Transverse colon (tissue), 4 donors: ENCODE measurements at regions of chr7 and their contacts with region 1.

Region 1: GRCh38 chr7:93426155-93426696 is 148.3 kb downstream of the CALCR start:
- DNase-seq: no peak
- H3K4me3 ChIP-seq: no peak overlapping the region
- H3K27ac ChIP-seq: no peak overlapping the region
- H3K4me1 ChIP-seq: no peaks in the 10 kb centered on the region
- H3K27me3 ChIP-seq: no peaks in the 10 kb centered on the region
- CTCF ChIP-seq: no peak
- EP300 ChIP-seq: no peak
- POLR2A ChIP-seq: no peak

Region 2: DNA sequence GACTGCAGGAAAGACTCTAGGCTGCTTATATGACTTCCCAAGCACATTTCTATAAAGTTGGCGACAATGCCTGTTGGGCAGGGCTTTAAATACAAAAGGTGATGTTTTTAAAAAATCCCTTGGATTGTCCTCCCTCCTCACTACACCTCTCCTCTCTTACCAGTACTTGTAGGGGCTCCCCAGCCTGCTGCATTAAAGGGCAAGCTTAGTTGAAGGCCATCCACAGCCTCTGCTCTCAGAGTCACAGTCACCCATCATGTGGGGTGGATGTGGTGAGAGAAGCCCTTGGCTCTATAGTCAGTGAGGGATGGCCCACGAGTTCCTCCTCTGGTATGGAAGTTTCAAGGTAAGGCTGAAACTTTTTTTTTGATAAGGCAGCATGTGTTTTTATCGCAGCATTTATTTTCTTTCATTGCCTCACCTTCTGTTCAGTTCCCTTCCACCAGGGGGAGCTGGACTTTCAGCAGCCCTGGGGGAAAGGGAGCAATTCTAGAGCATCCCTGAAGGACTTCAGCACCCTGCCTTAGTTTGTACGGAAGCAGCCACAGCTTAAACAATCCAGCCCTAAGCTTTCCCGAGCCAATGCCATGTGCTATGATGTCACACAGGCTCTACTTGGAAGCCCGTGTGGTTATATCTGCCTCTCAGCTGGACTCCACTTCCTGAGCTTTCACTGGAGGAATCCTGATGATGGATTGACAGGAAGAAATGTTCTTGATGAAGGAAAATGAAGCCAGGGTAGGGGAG is 16.4 kb after region 1 on chr7:
- in situ Hi-C with region 1: no loop called
- intact Hi-C with region 1: loop called (anchors 1 kb)
- DNase-seq: peak; percentile 13
- H3K4me3 ChIP-seq: no peak overlapping the region
- H3K27ac ChIP-seq: no peak overlapping the region
- H3K4me1 ChIP-seq: no peaks in the 10 kb centered on the region
- H3K27me3 ChIP-seq: no peaks in the 10 kb centered on the region
- CTCF ChIP-seq: peak; percentile 19 to 59 (median 42)
- EP300 ChIP-seq: no peak
- POLR2A ChIP-seq: no peak